Activated CD4-positive, alpha-beta T cell treated with anti-CD3 and anti-CD28 coated beads for 36 hours (primary cell): ENCODE measurements at regions of chr17 and their contacts with region 1.

Region 1: DNA sequence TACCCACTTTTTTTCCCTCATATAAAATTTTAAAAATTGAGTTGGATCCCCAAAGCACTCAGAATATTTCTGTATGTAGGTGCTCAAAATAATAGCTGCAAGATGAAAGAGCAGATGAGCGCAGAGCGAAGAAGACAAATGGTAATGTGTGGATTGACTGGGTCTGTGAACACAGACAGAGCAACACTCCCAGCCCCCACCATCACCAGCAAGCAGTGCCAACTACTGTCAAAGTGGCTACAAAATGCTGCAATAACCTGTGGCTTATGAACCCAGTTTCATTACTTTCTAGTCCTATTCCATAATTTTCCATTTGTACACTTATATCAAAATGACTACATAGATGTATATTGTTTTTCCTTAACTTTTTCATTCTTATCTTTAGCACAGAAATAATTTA is 137.2 kb downstream of the MYO1D start:
- DNase-seq: no peak
- ATAC-seq: no peak
- H3K4me3 Mint-ChIP-seq: no peak overlapping the region
- H3K27ac Mint-ChIP-seq: no peak overlapping the region
- H3K4me1 Mint-ChIP-seq: no peaks in the 10 kb centered on the region
- H3K27me3 Mint-ChIP-seq: no peaks in the 10 kb centered on the region

Region 2: DNA sequence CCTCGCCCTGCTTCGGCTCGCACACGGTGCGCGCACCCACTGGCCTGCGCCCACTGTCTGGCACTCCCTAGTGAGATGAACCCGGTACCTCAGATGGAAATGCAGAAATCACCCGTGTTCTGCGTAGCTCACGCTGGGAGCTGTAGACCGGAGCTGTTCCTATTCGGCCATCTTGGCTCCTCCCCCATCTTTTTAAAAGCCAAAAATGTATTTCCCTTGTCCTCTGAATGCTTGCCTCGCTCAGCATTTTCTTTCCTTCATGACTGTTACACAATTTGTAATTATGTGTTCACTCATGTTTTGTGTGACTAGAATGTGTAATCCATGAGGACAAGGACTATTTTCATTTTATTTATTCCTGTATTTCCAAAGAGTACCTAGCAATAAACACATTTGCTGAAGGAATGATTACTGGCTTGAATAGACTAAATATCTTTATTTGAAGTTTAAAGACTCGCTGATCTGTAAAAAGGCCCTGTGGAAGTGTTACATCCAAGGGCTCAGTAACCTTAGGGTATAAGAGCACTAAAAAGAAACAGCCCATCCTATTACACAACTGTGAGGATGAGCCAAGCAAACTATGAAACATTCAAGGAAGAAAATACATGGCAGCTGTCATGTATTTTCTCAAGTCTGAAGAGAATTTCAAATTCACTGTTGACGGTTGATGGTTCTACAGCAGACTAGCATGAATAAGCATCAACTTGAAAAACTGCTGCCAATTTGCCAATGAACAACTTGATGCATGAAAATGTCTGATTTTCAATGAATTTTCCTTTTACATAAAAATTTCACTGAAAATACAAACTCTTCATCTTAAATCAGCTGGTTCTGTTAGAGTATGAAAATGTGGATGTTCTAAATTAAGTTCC is 55.4 kb before region 1 on chr17:
- CTCF ChIA-PET with region 1: no interaction called
- POLR2A ChIA-PET with region 1: no interaction called
- intact Hi-C with region 1: no loop called
- DNase-seq: no peak
- ATAC-seq: no peak
- H3K4me3 Mint-ChIP-seq: no peak overlapping the region
- H3K27ac Mint-ChIP-seq: no peak overlapping the region
- H3K4me1 Mint-ChIP-seq: no peaks in the 10 kb centered on the region
- H3K27me3 Mint-ChIP-seq: no peaks in the 10 kb centered on the region

Region 3: GRCh38 chr17:32719689-32720088 is 20.0 kb before region 1 on chr17:
- CTCF ChIA-PET with region 1: no interaction called
- POLR2A ChIA-PET with region 1: no interaction called
- intact Hi-C with region 1: loop called in 1 of 2 experiments (anchors 2 kb)
- DNase-seq: no peak
- ATAC-seq: no peak
- H3K4me3 Mint-ChIP-seq: no peak overlapping the region
- H3K27ac Mint-ChIP-seq: no peak overlapping the region
- H3K4me1 Mint-ChIP-seq: no peaks in the 10 kb centered on the region
- H3K27me3 Mint-ChIP-seq: no peaks in the 10 kb centered on the region

Region 4: DNA sequence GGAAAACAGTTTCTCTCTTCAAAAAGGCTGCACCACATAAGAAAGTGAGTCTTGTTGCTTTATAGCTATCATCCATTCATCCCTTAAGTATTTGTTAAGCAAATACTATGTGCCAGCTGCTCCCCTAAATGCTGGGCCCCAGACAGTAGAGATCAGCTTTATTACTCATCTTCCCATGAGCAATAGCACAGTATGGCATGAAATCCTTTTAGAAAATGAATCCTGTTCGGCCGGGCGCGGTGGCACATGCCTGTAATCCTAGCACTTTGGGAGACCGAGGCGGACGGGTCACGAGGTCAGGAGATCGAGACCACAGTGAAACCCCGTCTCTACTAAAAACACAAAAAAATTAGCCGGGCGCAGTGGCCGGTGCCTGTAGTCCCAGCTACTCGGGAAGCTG is 37.7 kb after region 1 on chr17:
- CTCF ChIA-PET with region 1: no interaction called
- POLR2A ChIA-PET with region 1: no interaction called
- intact Hi-C with region 1: no loop called
- DNase-seq: no peak
- ATAC-seq: no peak
- H3K4me3 Mint-ChIP-seq: no peak overlapping the region
- H3K27ac Mint-ChIP-seq: no peak overlapping the region
- H3K4me1 Mint-ChIP-seq: no peaks in the 10 kb centered on the region
- H3K27me3 Mint-ChIP-seq: no peaks in the 10 kb centered on the region

Region 5: DNA sequence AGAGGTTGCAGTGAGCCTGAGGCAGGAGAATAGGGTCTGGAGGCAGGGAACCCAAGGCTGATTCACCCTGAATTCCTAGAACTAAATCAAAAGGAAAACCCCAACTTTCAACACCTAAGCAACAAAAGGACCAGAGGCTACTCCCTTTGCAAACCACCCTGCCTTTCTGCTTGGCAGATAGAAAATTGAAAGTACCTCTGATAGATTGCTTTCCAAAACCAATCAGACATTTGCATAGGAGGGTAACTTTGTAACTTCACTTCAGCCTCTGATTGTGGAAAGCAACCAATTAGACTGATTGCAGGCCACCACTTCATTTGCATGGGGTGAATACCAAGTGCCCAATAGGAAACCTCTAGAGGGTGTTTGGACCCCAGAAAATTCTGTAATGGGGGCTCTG is 177.4 kb after region 1 on chr17:
- CTCF ChIA-PET with region 1: no interaction called
- POLR2A ChIA-PET with region 1: no interaction called
- intact Hi-C with region 1: no loop called
- DNase-seq: no peak
- ATAC-seq: no peak
- H3K4me3 Mint-ChIP-seq: no peak overlapping the region
- H3K27ac Mint-ChIP-seq: no peak overlapping the region
- H3K4me1 Mint-ChIP-seq: peaks cover 17% of the 10 kb centered on the region
- H3K27me3 Mint-ChIP-seq: peaks cover 6% of the 10 kb centered on the region